Thyroid gland (tissue), 4 donors: ENCODE measurements at regions of chr3 and their contacts with region 1.

Region 1: GRCh38 chr3:127544192-127544802 is 46.2 kb downstream of the TPRA1 start:
- DNase-seq: peak; percentile 69 to 74
- H3K4me3 ChIP-seq: no peak overlapping the region
- H3K27ac ChIP-seq: no peak overlapping the region
- H3K4me1 ChIP-seq: peaks cover 10 to 23% of the 10 kb centered on the region in 2 donors
- H3K27me3 ChIP-seq: no peaks in the 10 kb centered on the region
- CTCF ChIP-seq: peak; percentile 49 to 85 (median 64)
- POLR2A ChIP-seq: no peak

Region 2: GRCh38 chr3:126522363-126522788 is 1021.9 kb before region 1 on chr3:
- intact Hi-C with region 1: loop called (anchors 5 kb)
- DNase-seq: peak; percentile 53 to 57
- H3K4me3 ChIP-seq: no peak overlapping the region
- H3K27ac ChIP-seq: no peak overlapping the region
- H3K4me1 ChIP-seq: peaks cover 0 to 8% of the 10 kb centered on the region in 2 donors
- H3K27me3 ChIP-seq: no peaks in the 10 kb centered on the region
- CTCF ChIP-seq: peak; percentile 70 to 98 (median 83)
- POLR2A ChIP-seq: no peak